ENCODE measurements at regions of chr21 and their contacts with region 1.

Region 1: GRCh38 chr21:38897532-38898422 is 92.0 kb downstream of the ETS2 start:
- DNase-seq: peak; percentile 69
- H3K4me3 ChIP-seq: no peak overlapping the region
- H3K27ac ChIP-seq: peak overlapping the region in 3 of 4 donors; percentile 48 to 60 (median 48)
- H3K4me1 ChIP-seq: peaks cover 0 to 12% (median 4%) of the 10 kb centered on the region in 4 donors
- H3K27me3 ChIP-seq: no peaks in the 10 kb centered on the region
- CTCF ChIP-seq: no peak
- EP300 ChIP-seq: peak; percentile 64 to 87 (median 82)
- POLR2A ChIP-seq: no peak

Region 2: GRCh38 chr21:38733973-38734546 is 163.7 kb before region 1 on chr21:
- intact Hi-C with region 1: loop called (anchors 5 kb)
- DNase-seq: peak; percentile 92
- H3K4me3 ChIP-seq: peak overlapping the region in 3 of 4 donors; percentile 11 to 40 (median 38)
- H3K27ac ChIP-seq: peak overlapping the region; percentile 55 to 76 (median 75)
- H3K4me1 ChIP-seq: peaks cover 0 to 9% (median 6%) of the 10 kb centered on the region in 4 donors
- H3K27me3 ChIP-seq: no peaks in the 10 kb centered on the region
- CTCF ChIP-seq: peak; percentile 84 to 93 (median 90)
- EP300 ChIP-seq: no peak
- POLR2A ChIP-seq: no peak

Region 3: DNA sequence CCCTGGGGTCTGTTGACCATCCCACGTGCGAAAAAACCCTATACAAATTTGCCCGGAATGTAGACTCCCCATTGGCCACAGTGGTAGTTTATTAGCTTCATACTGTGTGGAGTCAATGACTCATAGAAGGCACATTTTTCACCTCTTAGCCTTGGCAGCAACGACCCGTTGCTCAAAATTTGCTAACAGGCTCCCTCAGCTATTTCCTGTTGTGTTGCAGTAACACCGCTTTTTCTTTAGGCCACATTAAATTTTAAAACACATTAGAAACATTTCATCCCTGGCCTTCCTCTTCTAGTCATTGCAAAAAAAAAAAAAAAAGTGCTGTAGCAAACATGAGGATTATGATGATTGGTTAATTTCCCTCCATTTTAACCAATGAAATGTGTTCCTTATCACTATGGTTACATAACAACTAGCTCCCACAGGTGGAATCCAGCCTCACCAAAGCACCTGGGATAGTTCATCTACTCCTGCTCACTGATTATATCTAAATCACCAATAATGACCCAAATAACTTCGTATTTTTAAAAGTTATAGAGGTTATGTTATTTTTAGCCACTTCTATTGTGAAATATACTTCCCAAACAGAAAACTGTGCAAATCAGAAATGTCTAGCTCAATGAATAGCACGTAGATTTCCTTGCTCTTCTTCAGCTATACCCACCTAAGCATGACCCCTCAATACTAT is 142.0 kb before region 1 on chr21:
- intact Hi-C with region 1: loop called (anchors 5 kb)
- DNase-seq: peak; percentile 86
- H3K4me3 ChIP-seq: no peak overlapping the region
- H3K27ac ChIP-seq: peak overlapping the region; percentile 64 to 89 (median 76)
- H3K4me1 ChIP-seq: peaks cover 0 to 76% (median 57%) of the 10 kb centered on the region in 4 donors
- H3K27me3 ChIP-seq: no peaks in the 10 kb centered on the region
- CTCF ChIP-seq: no peak
- EP300 ChIP-seq: peak in 1 of 4 donors; percentile 17
- POLR2A ChIP-seq: no peak

Region 4: GRCh38 chr21:38811257-38811656 is 86.5 kb before region 1 on chr21:
- intact Hi-C with region 1: loop called (anchors 5 kb)
- DNase-seq: no peak
- H3K4me3 ChIP-seq: no peak overlapping the region
- H3K27ac ChIP-seq: peak overlapping the region; percentile 92 to 98 (median 94)
- H3K4me1 ChIP-seq: peaks cover 0 to 76% (median 37%) of the 10 kb centered on the region in 4 donors
- H3K27me3 ChIP-seq: no peaks in the 10 kb centered on the region
- CTCF ChIP-seq: no peak
- EP300 ChIP-seq: no peak
- POLR2A ChIP-seq: no peak

Region 5: DNA sequence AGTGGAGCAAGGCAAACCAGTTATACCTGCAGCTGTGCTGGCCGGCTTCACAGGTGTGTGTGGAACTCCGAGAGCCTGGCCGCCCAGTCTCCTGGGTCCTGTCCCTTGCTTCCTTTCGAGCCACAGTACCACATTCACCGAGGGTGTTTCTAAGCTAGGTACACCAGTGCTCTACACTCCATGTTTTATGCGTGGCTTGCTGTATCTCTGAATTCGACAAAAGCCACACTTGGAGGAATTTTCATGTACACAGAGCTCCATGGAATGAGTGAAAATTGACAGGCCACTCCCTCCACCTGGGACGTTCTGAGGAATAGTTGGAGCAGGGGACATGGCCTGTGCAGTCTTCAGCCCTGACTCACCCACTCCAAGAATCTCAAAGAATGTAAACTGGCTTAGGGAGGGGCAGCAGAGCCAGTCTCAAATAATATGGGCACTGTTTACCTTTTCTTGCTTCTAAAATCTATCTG is 78.0 kb before region 1 on chr21:
- intact Hi-C with region 1: loop called (anchors 2 kb)
- DNase-seq: no peak
- H3K4me3 ChIP-seq: no peak overlapping the region
- H3K27ac ChIP-seq: peak overlapping the region; percentile 14 to 83 (median 78)
- H3K4me1 ChIP-seq: peaks cover 0 to 79% (median 52%) of the 10 kb centered on the region in 4 donors
- H3K27me3 ChIP-seq: no peaks in the 10 kb centered on the region
- CTCF ChIP-seq: no peak
- EP300 ChIP-seq: no peak
- POLR2A ChIP-seq: no peak

Region 6: DNA sequence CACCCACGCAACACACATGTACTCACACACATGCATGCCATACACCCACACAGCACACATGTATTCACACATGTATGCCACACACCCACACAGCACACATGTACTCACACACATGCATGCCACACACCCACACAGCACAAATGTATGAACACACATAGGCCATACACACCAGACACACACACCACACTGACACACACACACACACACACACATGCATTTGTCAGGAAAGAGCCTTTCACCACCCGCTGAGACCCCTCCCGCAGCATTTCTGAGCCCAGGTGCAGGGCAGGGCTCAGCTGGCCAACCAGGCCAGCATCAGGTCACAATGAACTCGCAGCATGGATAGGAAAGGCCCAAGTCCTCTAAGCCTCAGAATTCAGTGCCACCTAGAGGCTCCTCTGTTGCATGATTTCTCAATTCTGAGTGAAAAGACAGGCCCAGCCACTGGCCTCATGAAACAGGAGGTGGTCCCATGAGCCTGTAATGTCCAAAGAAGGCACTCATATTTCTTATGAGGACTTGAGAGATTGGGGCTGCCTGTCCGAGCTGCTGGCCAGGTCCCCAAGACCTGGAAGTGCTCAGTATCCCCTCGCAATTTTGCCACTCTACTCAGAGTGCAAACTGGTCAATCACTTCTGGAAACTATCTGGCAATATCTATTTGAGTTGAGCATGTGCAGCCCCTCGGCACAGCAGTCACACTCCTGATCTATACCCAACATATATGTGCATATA is 228.1 kb after region 1 on chr21:
- intact Hi-C with region 1: loop called (anchors 10 kb)
- DNase-seq: peak; percentile 78
- H3K4me3 ChIP-seq: no peak overlapping the region
- H3K27ac ChIP-seq: peak overlapping the region in 3 of 4 donors; percentile 14 to 51 (median 45)
- H3K4me1 ChIP-seq: peaks cover 4 to 18% (median 9%) of the 10 kb centered on the region in 4 donors
- H3K27me3 ChIP-seq: no peaks in the 10 kb centered on the region
- CTCF ChIP-seq: peak; percentile 41 to 67 (median 60)
- EP300 ChIP-seq: no peak
- POLR2A ChIP-seq: no peak